ENCODE measurements at regions of chr1 and their contacts with region 1.

Region 1: DNA sequence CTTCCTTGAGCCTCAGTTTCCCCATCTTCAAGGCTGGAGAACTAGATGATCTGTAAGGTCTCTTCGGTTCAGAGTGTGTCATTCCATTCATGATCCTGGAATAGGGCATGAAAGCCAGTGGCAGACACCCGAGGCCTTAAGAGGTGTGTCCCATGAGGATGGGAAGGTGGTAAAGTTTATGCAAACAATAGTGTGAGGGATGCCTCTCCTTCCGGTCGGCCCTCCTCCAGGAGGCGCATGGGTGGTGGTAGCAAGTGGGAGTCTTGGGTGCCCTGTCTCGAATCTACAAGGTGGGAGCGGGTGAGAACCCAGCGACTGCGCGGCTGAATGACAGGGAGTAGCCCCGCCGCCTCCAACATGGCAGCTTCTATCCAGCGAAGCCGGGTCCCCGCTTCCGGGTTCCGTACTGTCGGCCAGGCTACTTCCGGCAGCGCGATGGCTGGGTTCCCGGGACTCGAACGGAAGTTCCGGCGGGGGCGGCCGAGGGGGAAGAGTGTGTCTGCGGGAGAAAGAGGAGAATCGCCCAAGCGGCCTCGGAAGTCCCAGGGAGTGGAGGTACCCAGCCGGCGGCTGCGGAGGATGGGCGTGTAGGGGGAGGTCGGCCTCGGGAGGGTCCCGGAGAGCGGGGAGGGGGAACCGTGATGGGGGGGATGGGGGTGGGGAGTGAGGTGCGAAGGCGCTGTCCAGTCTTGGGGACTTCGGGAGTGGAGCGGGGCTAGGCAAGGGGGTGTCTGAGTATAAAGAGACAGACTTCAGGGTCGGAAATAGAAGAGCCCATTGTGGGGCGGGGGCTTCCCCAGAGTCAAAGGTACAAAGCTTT is at the start of gene LYPLA2:
- DNase-seq: peak; percentile 95
- ATAC-seq: peak; percentile 93
- H3K4me3 Mint-ChIP-seq: peak within 1 kb of the TSS; percentile 86
- H3K27ac Mint-ChIP-seq: peak within 1 kb of the TSS; percentile 79
- H3K4me1 Mint-ChIP-seq: peaks cover 13% of the 10 kb centered on the region
- H3K27me3 Mint-ChIP-seq: no peaks in the 10 kb centered on the region
- total RNA-seq, gene LYPLA2: 55.0 to 64.8 TPM

Region 2: GRCh38 chr1:23777979-23778814 is 12.7 kb before region 1 on chr1 and contains the start of gene PITHD1:
- CTCF ChIA-PET with region 1: interaction called, 10 read pairs
- POLR2A ChIA-PET with region 1: interaction called, 7 read pairs
- intact Hi-C with region 1: loop called (anchors 1 kb)
- DNase-seq: peak; percentile 90
- ATAC-seq: peak; percentile 87
- H3K4me3 Mint-ChIP-seq: peak within 1 kb of the TSS; percentile 87
- H3K27ac Mint-ChIP-seq: peak within 1 kb of the TSS; percentile 87
- H3K4me1 Mint-ChIP-seq: peaks cover 43% of the 10 kb centered on the region
- H3K27me3 Mint-ChIP-seq: no peaks in the 10 kb centered on the region
- total RNA-seq, gene PITHD1: 53.1 to 64.1 TPM

Measured in activated CD4-positive, alpha-beta T cell treated with anti-CD3 and anti-CD28 coated beads for 36 hours (primary cell).